Transverse colon (tissue), 4 donors: ENCODE measurements at regions of chr3 and their contacts with region 1.

Region 1: DNA sequence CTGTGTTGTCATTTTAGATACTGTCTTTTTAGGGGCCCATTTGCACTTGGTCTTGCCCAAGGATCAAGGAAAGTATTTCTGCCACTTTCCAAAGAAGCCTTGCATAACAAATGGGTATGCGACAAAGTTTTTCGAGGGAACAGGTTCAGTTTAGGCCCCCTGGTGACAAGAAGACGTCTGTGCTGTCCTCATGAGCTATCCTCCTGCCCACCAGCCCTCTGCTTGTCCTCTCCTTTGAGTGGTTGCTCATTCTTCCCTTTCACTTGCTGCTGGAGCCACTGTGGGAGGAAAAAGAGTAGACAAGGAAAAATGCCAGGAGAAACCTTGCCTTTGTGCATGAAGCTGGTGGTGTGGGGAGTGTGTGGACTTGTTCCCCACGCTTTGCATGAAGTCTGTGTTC is 171.9 kb downstream of the CACNA2D3 start:
- DNase-seq: no peak
- H3K4me3 ChIP-seq: no peak overlapping the region
- H3K27ac ChIP-seq: no peak overlapping the region
- H3K4me1 ChIP-seq: no peaks in the 10 kb centered on the region
- H3K27me3 ChIP-seq: no peaks in the 10 kb centered on the region
- CTCF ChIP-seq: no peak
- EP300 ChIP-seq: no peak
- POLR2A ChIP-seq: no peak

Region 2: GRCh38 chr3:54053211-54053610 is 241.0 kb before region 1 on chr3:
- in situ Hi-C with region 1: no loop called
- intact Hi-C with region 1: no loop called
- DNase-seq: no peak
- H3K4me3 ChIP-seq: no peak overlapping the region
- H3K27ac ChIP-seq: no peak overlapping the region
- H3K4me1 ChIP-seq: no peaks in the 10 kb centered on the region
- H3K27me3 ChIP-seq: no peaks in the 10 kb centered on the region
- CTCF ChIP-seq: no peak
- EP300 ChIP-seq: no peak
- POLR2A ChIP-seq: no peak

Region 3: DNA sequence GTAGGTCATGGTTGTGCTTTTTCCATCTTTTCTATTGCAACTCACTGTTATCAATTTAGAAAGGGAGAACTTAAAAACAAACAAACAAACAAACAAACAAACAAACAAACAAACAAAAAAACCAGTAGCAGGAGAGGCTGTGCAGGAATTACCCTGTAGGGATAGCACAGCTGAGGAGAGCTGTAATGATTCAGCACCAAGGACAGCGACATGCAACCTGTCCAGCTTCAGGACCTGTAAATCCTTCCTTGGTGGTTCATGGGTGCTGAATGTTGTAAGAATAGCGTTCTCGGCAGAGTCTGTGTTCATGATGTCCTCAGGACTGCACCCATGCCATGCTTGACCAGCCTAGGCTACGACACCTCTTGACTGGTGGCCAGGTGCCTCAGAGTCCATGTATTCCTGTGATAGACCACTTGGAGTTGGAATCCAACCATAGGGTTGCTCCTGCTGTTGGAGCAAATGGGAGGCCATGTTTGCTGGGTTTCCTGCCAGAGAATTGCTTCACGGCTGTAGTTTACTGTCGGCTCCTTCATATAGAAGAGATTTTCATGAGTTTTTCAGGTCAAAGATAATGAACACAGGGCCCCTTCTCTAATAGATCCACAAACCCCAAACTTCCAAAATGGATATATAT is 105.9 kb before region 1 on chr3:
- in situ Hi-C with region 1: no loop called
- intact Hi-C with region 1: loop called (anchors 10 kb)
- DNase-seq: peak; percentile 38
- H3K4me3 ChIP-seq: no peak overlapping the region
- H3K27ac ChIP-seq: no peak overlapping the region
- H3K4me1 ChIP-seq: no peaks in the 10 kb centered on the region
- H3K27me3 ChIP-seq: no peaks in the 10 kb centered on the region
- CTCF ChIP-seq: no peak
- EP300 ChIP-seq: no peak
- POLR2A ChIP-seq: no peak

Region 4: GRCh38 chr3:54322354-54322753 is 28.1 kb after region 1 on chr3:
- in situ Hi-C with region 1: no loop called
- intact Hi-C with region 1: no loop called
- DNase-seq: peak; percentile 75
- H3K4me3 ChIP-seq: no peak overlapping the region
- H3K27ac ChIP-seq: no peak overlapping the region
- H3K4me1 ChIP-seq: peaks cover 0 to 16% (median 6%) of the 10 kb centered on the region in 4 donors
- H3K27me3 ChIP-seq: no peaks in the 10 kb centered on the region
- CTCF ChIP-seq: no peak
- EP300 ChIP-seq: no peak
- POLR2A ChIP-seq: no peak